Heart right ventricle (tissue), 16 donors: ENCODE measurements at regions of chr2 and their contacts with region 1.

Region 1: DNA sequence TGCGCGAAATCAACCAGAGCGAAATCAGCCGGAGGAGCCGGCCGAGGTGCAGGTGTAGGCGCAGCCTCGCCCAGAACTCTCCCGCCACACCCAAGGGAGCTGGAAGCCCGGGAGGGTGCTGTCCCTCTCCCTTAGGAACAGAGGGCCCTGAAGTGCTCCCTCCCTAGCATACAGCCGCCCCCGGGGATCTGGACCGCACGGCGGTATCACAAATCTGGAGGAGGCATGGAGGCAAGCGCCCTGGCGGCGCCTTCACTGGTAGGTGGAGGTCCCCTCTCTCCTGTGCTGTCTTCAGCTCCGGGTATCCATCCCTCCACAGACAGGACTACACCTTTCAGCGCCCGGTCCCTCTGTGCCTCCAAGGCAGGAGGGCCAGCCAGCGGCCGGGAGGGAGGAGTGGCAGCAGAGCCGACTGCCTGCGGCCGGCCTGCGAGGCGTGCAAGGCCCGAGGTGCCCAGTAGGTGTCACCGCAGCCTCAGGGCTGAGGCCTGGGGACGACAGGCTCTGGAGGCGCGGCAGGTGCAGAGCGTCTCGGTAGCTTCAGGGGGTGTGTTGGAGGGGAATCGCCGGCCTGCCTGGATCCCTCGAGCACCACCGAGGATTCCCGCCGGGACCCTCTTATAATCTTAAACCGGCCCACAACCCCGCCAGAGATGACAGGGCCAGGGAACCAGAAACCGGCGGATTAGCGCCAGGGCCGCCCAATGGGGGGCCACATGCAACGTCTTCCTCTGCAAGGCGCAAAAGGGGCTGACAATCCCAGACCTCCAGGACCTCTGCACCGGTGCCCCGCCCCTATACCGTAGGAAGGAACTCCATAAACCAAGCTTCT is 2.8 kb downstream of the IHH start:
- DNase-seq: peak; percentile 63 to 80
- ATAC-seq: peak; percentile 91 to 97 (median 94)
- H3K4me3 ChIP-seq: peak overlapping the region in 4 of 10 donors; percentile 4 to 21 (median 18)
- H3K27ac ChIP-seq: no peak overlapping the region
- H3K4me1 ChIP-seq: peaks cover 27 to 40% (median 37%) of the 10 kb centered on the region in 9 donors
- H3K27me3 ChIP-seq: peaks cover 39 to 99% (median 88%) of the 10 kb centered on the region in 7 donors
- CTCF ChIP-seq: peak; percentile 88 to 97 (median 96)

Region 2: GRCh38 chr2:219017201-219017931 is 40.6 kb before region 1 on chr2:
- intact Hi-C with region 1: no loop called
- DNase-seq: no peak
- ATAC-seq: no peak
- H3K4me3 ChIP-seq: no peak overlapping the region
- H3K27ac ChIP-seq: no peak overlapping the region
- H3K4me1 ChIP-seq: no peaks in the 10 kb centered on the region
- H3K27me3 ChIP-seq: peaks cover 0 to 39% (median 18%) of the 10 kb centered on the region in 7 donors
- CTCF ChIP-seq: no peak

Region 3: DNA sequence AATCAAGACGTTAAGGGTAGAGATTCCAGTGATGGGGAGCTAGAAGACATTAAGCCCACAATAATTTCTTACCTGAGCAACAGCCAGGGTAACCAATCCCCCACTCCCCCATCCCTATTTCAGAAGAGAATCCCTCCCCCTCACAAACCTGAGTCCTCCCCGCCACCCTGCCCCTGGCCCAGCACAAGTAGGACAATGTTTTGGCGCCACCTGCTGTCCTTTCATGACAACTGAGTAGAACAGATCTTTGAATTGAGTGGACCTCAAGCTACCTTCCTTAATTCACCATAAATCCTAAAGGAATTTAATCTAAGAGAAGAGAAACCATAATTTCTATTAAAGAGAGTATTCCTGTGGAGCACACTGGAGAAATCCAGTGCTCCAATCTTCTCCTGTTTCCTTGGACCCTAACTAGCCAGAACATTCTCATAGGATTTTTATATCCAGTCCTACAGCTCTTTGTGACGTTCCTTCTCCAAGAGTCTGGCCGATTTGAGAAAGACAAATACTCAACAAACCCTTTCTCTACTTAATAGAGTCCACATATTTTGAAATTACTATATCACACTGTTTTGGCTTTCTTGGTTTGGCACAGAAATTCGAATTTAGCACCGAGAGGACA is 61.6 kb after region 1 on chr2:
- intact Hi-C with region 1: loop called (anchors 1 to 10 kb)
- DNase-seq: peak; percentile 39 to 70
- ATAC-seq: peak in 7 of 8 donors; percentile 62 to 92 (median 78)
- H3K4me3 ChIP-seq: no peak overlapping the region
- H3K27ac ChIP-seq: no peak overlapping the region
- H3K4me1 ChIP-seq: peaks cover 0 to 26% (median 14%) of the 10 kb centered on the region in 9 donors
- H3K27me3 ChIP-seq: no peaks in the 10 kb centered on the region
- CTCF ChIP-seq: peak; percentile 47 to 85 (median 77)

Region 4: GRCh38 chr2:219155054-219155644 is 97.2 kb after region 1 on chr2:
- intact Hi-C with region 1: loop called in 8 of 10 experiments (anchors 1 to 5 kb)
- DNase-seq: peak in 1 of 2 donors; percentile 57
- ATAC-seq: peak in 3 of 8 donors; percentile 27 to 53 (median 50)
- H3K4me3 ChIP-seq: no peak overlapping the region
- H3K27ac ChIP-seq: no peak overlapping the region
- H3K4me1 ChIP-seq: peaks cover 0 to 12% (median 6%) of the 10 kb centered on the region in 9 donors
- H3K27me3 ChIP-seq: no peaks in the 10 kb centered on the region
- CTCF ChIP-seq: peak; percentile 49 to 77 (median 66)

Region 5: GRCh38 chr2:219218732-219219701 is 161.1 kb after region 1 on chr2 and contains the start of gene ABCB6:
- intact Hi-C with region 1: no loop called
- DNase-seq: peak; percentile 97 to 98
- ATAC-seq: peak; percentile 90 to 93 (median 92)
- H3K4me3 ChIP-seq: peak within 1 kb of the TSS; percentile 30 to 75 (median 64)
- H3K27ac ChIP-seq: peak within 1 kb of the TSS; percentile 72 to 95 (median 90)
- H3K4me1 ChIP-seq: peaks cover 12 to 40% (median 34%) of the 10 kb centered on the region in 9 donors
- H3K27me3 ChIP-seq: no peaks in the 10 kb centered on the region
- CTCF ChIP-seq: no peak
- total RNA-seq, gene ABCB6: 9.8 to 31.0 (median 14.8) TPM

Region 6: GRCh38 chr2:219294356-219295351 is 236.7 kb after region 1 on chr2:
- intact Hi-C with region 1: loop called in 5 of 10 experiments (anchors 5 to 10 kb)
- DNase-seq: peak; percentile 81 to 90
- ATAC-seq: peak; percentile 86 to 92 (median 89)
- H3K4me3 ChIP-seq: peak overlapping the region; percentile 43 to 67 (median 62)
- H3K27ac ChIP-seq: peak overlapping the region; percentile 8 to 90 (median 82)
- H3K4me1 ChIP-seq: peaks cover 3 to 24% (median 12%) of the 10 kb centered on the region in 9 donors
- H3K27me3 ChIP-seq: peaks cover 0 to 13% (median 8%) of the 10 kb centered on the region in 7 donors
- CTCF ChIP-seq: peak; percentile 99 to 100 (median 99)